ENCODE measurements at regions of chr14 and their contacts with region 1.

Region 1: GRCh38 chr14:31435276-31435675 is 14.9 kb upstream of the HEATR5A start:
- DNase-seq: no peak
- ATAC-seq: no peak
- H3K4me3 ChIP-seq: no peak overlapping the region
- H3K27ac ChIP-seq: no peak overlapping the region
- H3K4me1 ChIP-seq: no peaks in the 10 kb centered on the region
- H3K27me3 ChIP-seq: no peaks in the 10 kb centered on the region
- CTCF ChIP-seq: no peak
- EP300 ChIP-seq: no peak
- POLR2A ChIP-seq: no peak
- RAD21 ChIP-seq: no peak

Region 2: GRCh38 chr14:31363331-31364073 is 71.8 kb before region 1 on chr14:
- CTCF ChIA-PET with region 1: no interaction called
- POLR2A ChIA-PET with region 1: no interaction called
- RAD21 ChIA-PET with region 1: no interaction called
- SMC1A ChIA-PET with region 1: no interaction called
- in situ Hi-C with region 1: no loop called
- intact Hi-C with region 1: no loop called
- DNase-seq: no peak
- ATAC-seq: no peak
- H3K4me3 ChIP-seq: no peak overlapping the region
- H3K27ac ChIP-seq: no peak overlapping the region
- H3K4me1 ChIP-seq: no peaks in the 10 kb centered on the region
- H3K27me3 ChIP-seq: no peaks in the 10 kb centered on the region
- CTCF ChIP-seq: no peak
- EP300 ChIP-seq: no peak
- POLR2A ChIP-seq: no peak
- RAD21 ChIP-seq: no peak

Region 3: DNA sequence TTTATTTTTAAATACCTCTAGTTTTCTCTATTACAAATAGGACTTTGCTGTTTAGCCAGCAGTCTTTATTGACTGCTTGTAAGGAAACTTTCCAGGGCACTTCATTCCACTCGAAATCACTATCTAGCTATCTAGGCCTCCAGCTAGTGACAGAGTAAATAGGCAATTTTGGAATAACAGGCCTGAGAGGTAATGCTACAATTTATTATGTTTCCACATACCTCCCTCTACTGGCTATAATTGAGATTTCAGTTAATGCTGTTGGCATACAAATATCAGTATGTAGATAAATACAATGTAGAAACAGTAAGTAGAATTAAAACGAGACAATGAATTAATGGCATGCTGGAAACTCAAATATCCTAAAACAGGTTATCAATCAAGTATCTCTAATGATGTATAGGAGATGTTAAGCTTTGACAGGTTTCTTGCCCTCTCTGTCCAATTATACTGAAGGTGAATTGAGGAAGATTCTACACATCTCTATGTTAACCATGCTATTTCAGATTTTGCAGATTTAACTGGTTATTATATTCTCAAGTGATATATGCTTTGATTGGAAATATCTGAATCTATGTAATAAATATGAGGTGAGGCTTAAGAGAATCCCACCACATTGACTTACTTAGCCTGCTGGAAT is 14.8 kb after region 1 on chr14:
- CTCF ChIA-PET with region 1: interaction called, 11 read pairs
- POLR2A ChIA-PET with region 1: no interaction called
- RAD21 ChIA-PET with region 1: interaction called, 3 read pairs
- SMC1A ChIA-PET with region 1: interaction called, 10 read pairs
- in situ Hi-C with region 1: no loop called
- intact Hi-C with region 1: no loop called
- DNase-seq: no peak
- ATAC-seq: peak; percentile 84
- H3K4me3 ChIP-seq: no peak overlapping the region
- H3K27ac ChIP-seq: no peak overlapping the region
- H3K4me1 ChIP-seq: no peaks in the 10 kb centered on the region
- H3K27me3 ChIP-seq: no peaks in the 10 kb centered on the region
- CTCF ChIP-seq: peak; percentile 48 to 53 (median 50); a peak in 4 of 6 replicates
- EP300 ChIP-seq: no peak
- POLR2A ChIP-seq: no peak
- RAD21 ChIP-seq: peak; percentile 53